ENCODE measurements at regions of chr11 and their contacts with region 1.

Region 1: DNA sequence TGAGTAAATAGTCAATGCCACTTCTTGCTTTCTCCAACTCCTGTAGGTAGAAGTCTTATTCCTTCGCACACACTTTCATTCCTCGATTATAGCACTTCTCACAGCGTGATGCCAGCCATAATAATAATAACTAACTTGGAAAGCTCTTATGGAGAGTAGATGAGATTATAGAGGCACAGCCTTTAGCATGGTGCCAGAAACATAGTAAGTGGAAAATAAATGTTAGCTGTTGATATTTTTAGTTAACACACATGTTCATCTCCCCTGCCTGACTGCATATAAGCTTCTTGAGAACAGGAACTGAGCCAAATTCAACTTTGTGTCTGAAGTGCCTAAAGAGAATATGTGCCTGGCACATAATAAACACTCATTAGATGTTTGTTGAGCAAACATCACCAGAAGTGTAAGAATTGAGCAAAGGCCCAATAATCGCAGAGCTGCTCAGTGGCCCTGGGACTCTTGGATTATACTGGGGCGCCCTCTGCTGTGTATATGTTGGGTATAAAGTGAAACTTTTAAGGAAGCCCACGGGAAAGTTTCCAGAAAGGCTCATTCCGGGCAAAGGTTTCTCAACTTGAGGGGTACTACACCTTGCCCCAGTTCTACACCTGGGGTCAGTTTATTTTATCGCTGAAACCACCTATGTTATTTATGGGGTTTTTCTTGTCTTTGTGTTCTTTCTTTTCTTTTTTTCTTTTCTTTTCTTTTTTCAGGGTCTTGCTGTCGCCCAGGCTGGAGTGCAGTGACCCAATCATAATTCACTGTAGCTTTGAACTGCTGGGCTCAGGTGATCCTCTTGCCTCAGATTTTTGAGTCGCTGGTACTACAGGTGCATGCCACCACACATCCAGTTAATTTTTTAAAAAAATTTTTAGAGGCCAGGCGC is 22.3 kb downstream of the SLN start:
- DNase-seq: peak; percentile 84

Region 2: DNA sequence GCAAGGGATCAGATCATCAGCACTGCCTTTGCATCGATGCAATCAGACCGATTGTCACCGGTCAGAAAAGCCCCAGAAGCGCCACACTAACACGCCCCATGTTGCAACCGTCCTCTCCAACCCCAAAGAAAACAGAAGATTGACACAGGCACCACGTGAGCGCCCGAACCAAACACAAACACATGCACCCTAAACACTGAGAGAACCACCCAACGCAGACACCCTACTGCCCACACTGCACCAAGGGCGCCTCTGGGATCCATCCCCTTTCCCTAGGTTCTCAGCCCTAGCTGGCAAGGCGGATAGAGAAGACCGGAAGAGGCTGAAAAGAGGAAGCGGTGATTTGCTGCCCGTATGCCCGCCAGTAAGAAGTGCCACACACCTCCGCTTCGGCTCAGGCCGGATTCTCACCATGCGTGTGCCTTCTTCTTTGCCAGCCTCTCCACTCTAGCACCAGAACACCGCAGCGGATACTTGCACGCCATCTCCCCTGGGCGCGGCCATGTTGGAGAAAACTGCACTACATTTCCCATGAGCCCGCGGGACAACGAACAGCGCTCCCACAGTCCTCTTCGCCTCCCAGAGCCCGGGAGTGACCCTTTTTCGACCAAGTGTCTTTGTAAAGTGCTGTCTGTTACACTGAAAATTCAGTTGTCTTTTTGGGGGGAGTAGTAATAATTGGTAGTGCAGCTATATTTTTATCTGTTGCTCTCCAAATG is 124.2 kb before region 1 on chr11 and contains the start of gene ALKBH8:
- intact Hi-C with region 1: loop called (anchors 1 to 5 kb)
- DNase-seq: peak; percentile 91
- total RNA-seq, gene ALKBH8: 10.3 to 10.7 TPM

Region 3: DNA sequence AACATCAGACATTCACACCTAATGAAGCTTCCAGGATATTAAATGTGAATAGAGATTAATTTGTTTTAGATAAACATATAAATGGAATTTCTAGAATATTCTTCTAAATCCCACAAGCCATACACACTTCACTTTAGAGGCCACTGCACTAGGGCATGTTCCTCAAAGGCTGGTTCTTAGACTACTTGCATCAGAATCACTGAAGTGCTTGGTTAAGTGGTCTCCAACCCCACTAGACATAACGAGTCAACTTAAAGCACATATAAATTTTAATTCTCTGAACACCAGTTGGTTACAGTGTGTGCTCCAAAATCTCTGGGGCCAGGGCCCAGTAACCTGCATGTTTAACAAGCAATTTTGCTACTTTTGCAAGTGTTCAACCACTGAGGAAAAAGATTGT is 116.1 kb before region 1 on chr11:
- intact Hi-C with region 1: loop called in 1 of 2 experiments (anchors 5 kb)
- DNase-seq: no peak

Region 4: DNA sequence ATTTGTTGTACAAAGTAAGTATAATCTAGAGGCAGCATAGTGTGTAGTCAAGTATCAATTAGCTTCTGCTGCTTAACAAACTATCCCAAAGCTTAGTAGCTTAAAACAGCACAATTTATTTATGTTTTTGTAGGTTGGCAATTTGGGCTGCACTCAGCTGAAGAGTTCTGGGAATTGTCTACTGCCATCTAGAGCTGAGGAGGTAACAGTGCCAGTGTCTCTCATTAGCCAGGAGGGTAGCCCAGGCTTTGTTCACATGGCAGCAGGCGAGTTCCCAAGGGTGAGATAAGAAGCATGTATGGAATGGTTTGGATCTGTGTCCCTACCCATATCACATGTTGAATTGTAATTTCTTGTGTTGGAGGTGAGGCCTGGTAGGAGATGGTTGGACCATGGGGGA is 68.1 kb after region 1 on chr11:
- intact Hi-C with region 1: loop called (anchors 5 to 10 kb)
- DNase-seq: no peak